Activated CD4-positive, alpha-beta T cell treated with anti-CD3 and anti-CD28 coated beads, Interleukin-2, amount 10 ng/mL, durations not matched to agents 24 days and 14 days (primary cell): ENCODE measurements at regions of chr19 and their contacts with region 1.

Region 1: DNA sequence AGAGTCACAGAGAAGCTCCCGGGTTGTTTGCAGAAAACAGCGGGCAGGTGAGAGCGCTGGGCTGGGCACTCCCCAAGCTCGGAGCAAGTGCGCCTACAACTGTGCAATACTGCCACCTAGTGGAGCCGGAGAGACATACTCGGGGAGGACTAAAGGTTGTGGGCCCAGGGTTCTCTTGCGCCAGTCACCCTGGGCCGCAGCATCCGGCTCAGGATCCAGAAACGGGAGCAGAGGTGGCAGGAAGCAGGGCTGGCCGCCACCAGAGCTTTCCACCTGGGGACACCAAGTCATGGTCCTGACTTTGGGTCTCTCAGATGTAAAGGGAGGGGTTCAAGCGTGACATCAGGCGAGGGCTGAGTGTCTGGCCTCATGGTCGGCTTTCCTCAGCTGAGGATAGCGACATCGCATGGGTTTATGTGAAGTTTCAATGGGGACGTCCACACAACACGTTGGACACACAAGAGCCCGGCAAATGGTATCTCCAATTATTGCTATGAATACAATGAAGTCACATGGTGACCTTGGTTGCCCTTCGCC is 11.2 kb upstream of the KLK4 start:
- DNase-seq: peak; percentile 93
- H3K4me3 Mint-ChIP-seq: no peak overlapping the region
- H3K27ac Mint-ChIP-seq: peak overlapping the region; percentile 26
- H3K4me1 Mint-ChIP-seq: peaks cover 11% of the 10 kb centered on the region
- H3K27me3 Mint-ChIP-seq: peaks cover 15% of the 10 kb centered on the region

Region 2: GRCh38 chr19:50568321-50569075 is 353.9 kb before region 1 on chr19 and contains the start of gene LRRC4B:
- intact Hi-C with region 1: no loop called
- DNase-seq: no peak
- H3K4me3 Mint-ChIP-seq: no peak within 1 kb of the TSS
- H3K27ac Mint-ChIP-seq: no peak within 1 kb of the TSS
- H3K4me1 Mint-ChIP-seq: peaks cover 16% of the 10 kb centered on the region
- H3K27me3 Mint-ChIP-seq: peaks cover 50% of the 10 kb centered on the region
- total RNA-seq, gene LRRC4B: 0.12 TPM in 1 of 2 replicates, not detected in the other

Region 3: GRCh38 chr19:50906217-50906616 is 16.2 kb before region 1 on chr19:
- intact Hi-C with region 1: loop called (anchors 1 kb)
- DNase-seq: peak; percentile 79
- H3K4me3 Mint-ChIP-seq: no peak overlapping the region
- H3K27ac Mint-ChIP-seq: no peak overlapping the region
- H3K4me1 Mint-ChIP-seq: peaks cover 2% of the 10 kb centered on the region
- H3K27me3 Mint-ChIP-seq: peaks cover 32% of the 10 kb centered on the region

Region 4: GRCh38 chr19:51097166-51097738 is 174.9 kb after region 1 on chr19:
- intact Hi-C with region 1: loop called (anchors 5 kb)
- DNase-seq: peak; percentile 87
- H3K4me3 Mint-ChIP-seq: no peak overlapping the region
- H3K27ac Mint-ChIP-seq: no peak overlapping the region
- H3K4me1 Mint-ChIP-seq: peaks cover 20% of the 10 kb centered on the region
- H3K27me3 Mint-ChIP-seq: no peaks in the 10 kb centered on the region